ENCODE measurements at regions of chr14 and their contacts with region 1.

Region 1: GRCh38 chr14:67943947-67944346 is 124.4 kb downstream of the RAD51B start:
- DNase-seq: peak; percentile 72 to 86
- H3K4me3 ChIP-seq: no peak overlapping the region
- H3K4me1 ChIP-seq: peaks cover 26% of the 10 kb centered on the region
- H3K27me3 ChIP-seq: no peaks in the 10 kb centered on the region

Region 2: DNA sequence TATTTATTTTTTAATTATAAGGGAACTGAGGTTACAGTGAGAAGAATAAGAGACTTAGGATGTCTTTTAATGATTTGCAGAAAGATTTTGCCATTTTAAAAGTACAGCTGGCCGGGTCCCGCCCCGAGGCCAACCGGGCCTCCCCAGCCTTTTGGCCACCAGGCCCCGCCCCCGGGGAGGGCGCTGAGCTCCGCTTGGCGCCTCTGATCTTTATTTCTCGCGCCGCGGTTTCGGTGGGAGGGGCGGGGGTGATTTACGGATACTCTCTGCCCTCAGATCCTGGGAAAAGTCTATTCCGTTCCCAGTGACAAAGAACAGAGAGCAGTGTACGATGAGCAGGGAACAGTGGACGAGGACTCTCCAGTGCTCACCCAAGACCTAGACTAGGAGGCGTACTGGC is 145.2 kb before region 1 on chr14:
- in situ Hi-C with region 1: no loop called
- DNase-seq: peak in 1 of 2 experiments; percentile 25
- H3K4me3 ChIP-seq: no peak overlapping the region
- H3K4me1 ChIP-seq: peaks cover 3% of the 10 kb centered on the region
- H3K27me3 ChIP-seq: no peaks in the 10 kb centered on the region

Region 3: GRCh38 chr14:67908052-67908754 is 35.7 kb before region 1 on chr14:
- in situ Hi-C with region 1: no loop called
- DNase-seq: no peak
- H3K4me3 ChIP-seq: no peak overlapping the region
- H3K4me1 ChIP-seq: no peaks in the 10 kb centered on the region
- H3K27me3 ChIP-seq: no peaks in the 10 kb centered on the region

Region 4: GRCh38 chr14:68248481-68249255 is 304.7 kb after region 1 on chr14:
- in situ Hi-C with region 1: loop called (anchors 10 kb)
- DNase-seq: peak; percentile 26 to 77
- H3K4me3 ChIP-seq: no peak overlapping the region
- H3K4me1 ChIP-seq: peaks cover 92% of the 10 kb centered on the region
- H3K27me3 ChIP-seq: no peaks in the 10 kb centered on the region

Measured in HAP-1 (cell line).